Tibial artery (tissue), 4 donors: ENCODE measurements at regions of chr9 and their contacts with region 1.

Region 1: GRCh38 chr9:21102305-21102704 is 24.6 kb upstream of the IFNB1 start:
- DNase-seq: no peak
- H3K4me3 ChIP-seq: no peak overlapping the region
- H3K27ac ChIP-seq: no peak overlapping the region
- H3K4me1 ChIP-seq: peaks cover 0 to 7% (median 0%) of the 10 kb centered on the region in 4 donors
- H3K27me3 ChIP-seq: no peaks in the 10 kb centered on the region
- CTCF ChIP-seq: no peak

Region 2: GRCh38 chr9:20356403-20357035 is 745.8 kb before region 1 on chr9:
- intact Hi-C with region 1: loop called (anchors 10 kb)
- DNase-seq: peak; percentile 50 to 71
- H3K4me3 ChIP-seq: peak overlapping the region; percentile 22 to 33
- H3K27ac ChIP-seq: peak overlapping the region; percentile 25 to 45
- H3K4me1 ChIP-seq: peaks cover 0 to 31% (median 13%) of the 10 kb centered on the region in 4 donors
- H3K27me3 ChIP-seq: no peaks in the 10 kb centered on the region
- CTCF ChIP-seq: peak; percentile 46 to 66

Region 3: DNA sequence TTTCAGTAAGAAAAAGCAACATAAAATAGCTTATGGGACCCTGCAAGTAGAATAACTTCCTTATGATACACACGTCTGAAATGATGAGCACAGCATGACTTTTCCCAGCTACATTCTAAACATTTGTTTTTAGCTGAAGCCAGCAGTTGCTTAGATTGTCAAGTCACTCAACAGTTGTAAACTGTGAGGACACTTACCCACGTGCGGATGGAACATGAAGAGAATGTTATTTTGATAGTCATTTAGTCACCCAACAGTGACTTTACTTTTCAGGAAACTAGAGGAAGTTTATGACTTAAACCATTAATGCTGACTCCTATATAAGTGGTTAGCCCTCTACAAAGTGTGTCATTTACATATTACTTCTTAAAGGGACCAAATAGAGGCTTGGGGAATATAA is 73.8 kb before region 1 on chr9:
- intact Hi-C with region 1: no loop called
- DNase-seq: no peak
- H3K4me3 ChIP-seq: no peak overlapping the region
- H3K27ac ChIP-seq: peak overlapping the region in 1 of 2 donors; percentile 5
- H3K4me1 ChIP-seq: peaks cover 0 to 17% (median 2%) of the 10 kb centered on the region in 4 donors
- H3K27me3 ChIP-seq: no peaks in the 10 kb centered on the region
- CTCF ChIP-seq: no peak

Region 4: DNA sequence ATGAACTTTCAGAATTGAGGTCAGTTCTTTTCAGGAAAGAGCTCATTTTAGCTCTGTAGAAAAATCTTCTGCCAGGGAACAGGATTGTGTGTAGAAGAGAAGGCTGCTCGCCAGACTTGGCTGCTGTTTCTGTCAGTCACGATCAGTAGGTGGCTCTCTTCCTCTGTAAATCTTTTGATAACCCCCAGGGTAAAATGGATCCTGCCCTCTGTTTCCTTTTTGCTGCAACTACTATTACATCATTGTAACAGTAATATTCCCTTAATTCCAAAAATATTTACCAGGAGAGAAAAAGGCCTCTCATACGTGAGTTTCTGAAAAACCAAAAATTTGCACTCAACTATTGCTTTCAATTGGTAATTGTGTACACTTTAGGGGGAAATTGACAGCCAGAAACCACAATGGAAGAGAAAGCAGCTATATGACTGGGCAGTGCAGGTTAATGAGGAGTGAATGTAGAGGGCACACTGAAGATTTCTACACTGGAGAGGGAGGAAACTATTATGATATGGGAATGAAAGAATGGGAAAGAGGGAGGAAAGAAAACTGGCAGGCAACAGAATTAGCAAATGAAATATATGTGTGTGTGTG is 51.8 kb after region 1 on chr9:
- intact Hi-C with region 1: no loop called
- DNase-seq: no peak
- H3K4me3 ChIP-seq: no peak overlapping the region
- H3K27ac ChIP-seq: no peak overlapping the region
- H3K4me1 ChIP-seq: peaks cover 0 to 7% (median 3%) of the 10 kb centered on the region in 4 donors
- H3K27me3 ChIP-seq: no peaks in the 10 kb centered on the region
- CTCF ChIP-seq: no peak